ENCODE measurements at regions of chr10 and their contacts with region 1.

Region 1: DNA sequence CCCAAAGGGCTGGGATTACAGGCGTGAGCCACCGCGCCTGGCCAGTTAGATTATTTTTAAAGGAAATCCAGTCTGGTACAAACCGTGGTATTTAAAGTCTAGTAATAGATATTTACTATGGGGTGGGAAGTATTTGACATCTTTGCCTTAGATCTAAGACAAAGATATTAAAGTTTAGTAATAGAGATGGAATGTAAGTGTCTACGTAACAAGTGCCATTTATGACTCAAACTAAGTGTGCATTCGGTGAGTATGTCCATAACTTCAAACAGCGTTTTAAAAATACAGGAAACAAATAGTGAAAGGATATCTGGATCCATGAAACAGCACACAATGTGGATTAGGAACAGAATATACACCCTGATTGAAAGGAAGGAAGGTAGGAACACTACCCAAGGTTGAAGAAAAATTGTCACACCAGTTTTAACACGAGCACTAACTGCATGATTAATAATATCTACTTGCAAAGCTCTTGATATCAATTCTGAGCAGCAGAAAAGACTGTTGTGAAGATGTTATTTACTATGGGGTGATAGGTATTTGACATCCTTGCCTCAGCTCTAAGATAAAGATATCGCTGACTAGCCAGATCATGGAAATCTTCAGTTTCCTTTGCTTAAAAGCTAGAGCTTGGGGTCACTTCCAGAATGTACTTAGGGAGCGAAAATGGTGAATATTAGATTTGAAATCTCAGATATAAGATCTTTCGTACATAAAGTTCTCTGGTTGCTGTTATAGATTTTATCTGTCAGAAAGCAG is 48.7 kb downstream of the EPC1 start:
- DNase-seq: no peak
- ATAC-seq: no peak
- H3K4me3 Mint-ChIP-seq: no peak overlapping the region
- H3K27ac Mint-ChIP-seq: peak overlapping the region; percentile 42
- H3K4me1 Mint-ChIP-seq: peaks cover 12% of the 10 kb centered on the region
- H3K27me3 Mint-ChIP-seq: no peaks in the 10 kb centered on the region
- CTCF ChIP-seq: no peak

Region 2: DNA sequence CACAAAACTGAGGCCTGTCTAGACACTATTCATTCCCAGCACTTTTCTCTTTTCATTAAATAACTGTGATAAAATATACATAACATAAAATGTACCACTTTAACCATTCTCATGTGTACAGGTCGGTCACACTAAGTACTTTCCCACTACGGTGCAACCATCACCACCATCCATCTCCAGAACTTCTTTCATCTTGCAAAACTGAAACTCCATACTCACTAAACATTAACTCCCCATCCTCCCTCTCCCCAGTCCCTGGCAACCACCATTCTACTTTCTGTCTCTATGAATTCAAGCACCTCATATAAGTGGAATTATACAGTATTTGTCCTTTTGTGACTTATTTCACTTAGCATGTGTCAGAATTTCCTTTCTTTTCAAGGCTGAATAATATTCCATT is 422.6 kb before region 1 on chr10:
- CTCF ChIA-PET with region 1: no interaction called
- POLR2A ChIA-PET with region 1: no interaction called
- intact Hi-C with region 1: no loop called
- DNase-seq: no peak
- ATAC-seq: no peak
- H3K4me3 Mint-ChIP-seq: no peak overlapping the region
- H3K27ac Mint-ChIP-seq: no peak overlapping the region
- H3K4me1 Mint-ChIP-seq: peaks cover 6% of the 10 kb centered on the region
- H3K27me3 Mint-ChIP-seq: no peaks in the 10 kb centered on the region
- CTCF ChIP-seq: no peak

Region 3: GRCh38 chr10:32023264-32023663 is 275.0 kb before region 1 on chr10:
- CTCF ChIA-PET with region 1: no interaction called
- POLR2A ChIA-PET with region 1: no interaction called
- intact Hi-C with region 1: loop called (anchors 10 kb)
- DNase-seq: no peak
- ATAC-seq: no peak
- H3K4me3 Mint-ChIP-seq: no peak overlapping the region
- H3K27ac Mint-ChIP-seq: no peak overlapping the region
- H3K4me1 Mint-ChIP-seq: peaks cover 10% of the 10 kb centered on the region
- H3K27me3 Mint-ChIP-seq: no peaks in the 10 kb centered on the region
- CTCF ChIP-seq: no peak

Region 4: GRCh38 chr10:32279795-32280194 is 18.4 kb before region 1 on chr10:
- CTCF ChIA-PET with region 1: no interaction called
- POLR2A ChIA-PET with region 1: no interaction called
- intact Hi-C with region 1: loop called (anchors 1 kb)
- DNase-seq: no peak
- ATAC-seq: no peak
- H3K4me3 Mint-ChIP-seq: no peak overlapping the region
- H3K27ac Mint-ChIP-seq: no peak overlapping the region
- H3K4me1 Mint-ChIP-seq: peaks cover under 1% of the 10 kb centered on the region
- H3K27me3 Mint-ChIP-seq: no peaks in the 10 kb centered on the region
- CTCF ChIP-seq: no peak

Measured in activated B cell treated with CpG ODN at 0.5 μM for 24 hours (primary cell).